Motor neuron (in vitro differentiated cells): ENCODE measurements at regions of chr6 and their contacts with region 1.

Region 1: DNA sequence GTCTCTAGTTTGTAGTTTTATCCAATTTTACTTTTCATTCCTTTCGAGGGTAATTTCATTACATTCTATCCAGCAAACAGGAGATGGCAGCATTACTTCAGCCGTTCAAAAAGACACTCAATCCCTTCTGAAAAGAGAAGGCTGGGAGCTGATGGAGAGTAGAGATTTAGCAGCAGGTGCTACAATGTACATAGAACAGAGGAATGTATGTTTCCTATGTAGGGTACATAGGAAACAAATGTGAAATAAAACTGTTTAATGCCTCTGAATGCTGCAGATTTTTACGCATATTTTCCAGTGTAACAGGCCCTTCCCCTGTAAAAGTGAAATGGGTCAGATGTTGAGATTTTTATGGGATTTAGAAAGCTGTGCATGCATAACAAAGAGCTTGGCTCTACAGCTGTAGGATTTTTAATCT is 16.0 kb downstream of the RPS12 start:
- ATAC-seq: peak; percentile 67 to 82 (median 73)
- H3K4me3 ChIP-seq: no peak overlapping the region
- H3K27ac ChIP-seq: no peak overlapping the region
- H3K4me1 ChIP-seq: peaks cover 0 to 4% of the 10 kb centered on the region in 2 donors

Region 2: GRCh38 chr6:132937466-132937906 is 107.1 kb after region 1 on chr6:
- in situ Hi-C with region 1: loop called in 2 of 9 experiments (anchors 25 kb)
- ATAC-seq: peak; percentile 41 to 94 (median 77)
- H3K4me3 ChIP-seq: no peak overlapping the region
- H3K27ac ChIP-seq: no peak overlapping the region
- H3K4me1 ChIP-seq: peaks cover 16 to 22% of the 10 kb centered on the region in 2 donors

Region 3: DNA sequence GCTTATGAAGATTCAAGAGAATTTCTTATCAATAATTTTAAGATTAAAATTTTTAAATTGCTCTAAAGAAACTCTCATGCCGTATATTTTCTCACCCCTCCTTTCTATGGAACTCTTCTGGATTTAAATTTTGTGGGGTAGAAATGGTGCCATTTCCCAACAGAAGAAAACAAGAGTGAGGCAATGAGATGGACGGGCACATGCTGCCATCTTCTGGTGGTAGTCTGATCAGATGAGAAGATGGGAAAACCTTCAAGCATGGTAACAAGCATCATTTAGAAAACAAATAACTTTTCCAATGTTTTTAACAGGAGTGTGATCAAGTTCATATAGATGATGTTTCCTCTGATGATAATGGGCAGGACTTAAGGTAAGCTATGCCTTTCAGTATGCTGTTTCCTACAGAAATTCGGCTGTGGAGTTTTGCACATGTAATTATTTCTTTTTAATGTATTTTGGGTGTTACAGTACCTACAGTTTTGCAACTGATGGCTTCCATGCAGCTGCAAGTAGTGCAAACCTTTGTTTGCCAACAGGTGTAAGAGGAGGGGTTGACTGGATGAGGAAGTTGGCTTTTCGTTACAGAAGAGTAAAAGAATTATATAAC is 682.2 kb after region 1 on chr6:
- in situ Hi-C with region 1: loop called in 2 of 9 experiments (anchors 25 kb)
- ATAC-seq: peak in 4 of 8 experiments; percentile 53 to 75 (median 63)
- H3K4me3 ChIP-seq: no peak overlapping the region
- H3K27ac ChIP-seq: no peak overlapping the region
- H3K4me1 ChIP-seq: no peaks in the 10 kb centered on the region

Region 4: DNA sequence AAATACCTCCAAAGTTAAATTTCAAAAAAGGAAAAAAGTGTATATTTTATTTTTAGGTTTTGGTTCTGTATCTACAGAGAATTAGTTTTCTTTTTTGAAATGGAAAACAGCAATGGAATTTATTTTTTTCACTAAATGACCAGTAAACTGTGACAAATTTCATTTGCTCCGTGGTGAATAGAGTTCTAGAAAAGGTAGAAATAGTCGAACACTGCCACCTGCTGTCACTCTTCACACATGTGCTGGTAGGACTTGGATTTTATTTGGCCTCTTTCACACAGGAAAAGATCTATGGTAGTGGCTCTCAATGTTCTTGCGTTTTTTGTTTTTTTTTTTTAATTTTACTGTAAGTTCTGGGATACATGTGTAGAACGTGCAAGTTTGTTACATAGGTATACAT is 723.3 kb after region 1 on chr6:
- in situ Hi-C with region 1: loop called in 7 of 9 experiments (anchors 10 to 25 kb)
- ATAC-seq: peak in 7 of 8 experiments; percentile 29 to 64 (median 48)
- H3K4me3 ChIP-seq: no peak overlapping the region
- H3K27ac ChIP-seq: no peak overlapping the region
- H3K4me1 ChIP-seq: peaks cover 12 to 13% of the 10 kb centered on the region in 2 donors

Region 5: DNA sequence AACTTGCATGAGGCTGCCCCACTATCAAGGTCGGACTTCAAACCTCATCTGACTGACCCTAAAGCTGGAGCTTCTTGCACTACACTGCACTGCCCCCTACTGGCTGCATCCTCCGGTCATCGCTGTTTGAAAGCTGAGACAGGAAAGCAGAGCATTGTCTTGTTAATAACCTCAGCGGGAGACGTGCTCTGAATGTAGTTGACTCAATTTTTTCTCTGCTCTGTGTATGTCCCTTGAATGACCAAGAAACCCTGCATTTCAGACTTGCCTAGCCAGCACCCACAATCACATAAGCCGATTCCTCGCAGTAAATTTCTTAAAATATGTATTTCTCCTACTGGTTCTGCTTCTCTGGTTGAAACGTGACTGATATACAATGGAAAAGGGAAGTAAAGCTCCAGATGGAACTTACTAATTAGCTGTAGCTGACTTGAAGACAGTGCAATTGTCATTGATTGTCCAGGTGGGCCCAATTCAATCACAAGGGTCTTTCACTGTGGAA is 1086.4 kb after region 1 on chr6:
- in situ Hi-C with region 1: loop called in 1 of 9 experiments (anchors 25 kb)
- ATAC-seq: peak; percentile 86 to 97 (median 95)
- H3K4me3 ChIP-seq: no peak overlapping the region
- H3K27ac ChIP-seq: no peak overlapping the region
- H3K4me1 ChIP-seq: peaks cover 4 to 6% of the 10 kb centered on the region in 2 donors